Activated CD4-positive, alpha-beta T cell treated with anti-CD3 and anti-CD28 coated beads, Interleukin-2, amount 10 ng/mL, durations not matched to agents 24 days and 14 days (primary cell): ENCODE measurements at regions of chr10 and their contacts with region 1.

Region 1: GRCh38 chr10:22714479-22715289 is at the start of gene PIP4K2A:
- DNase-seq: peak; percentile 94
- H3K4me3 Mint-ChIP-seq: peak within 1 kb of the TSS; percentile 90
- H3K27ac Mint-ChIP-seq: peak within 1 kb of the TSS; percentile 85
- H3K4me1 Mint-ChIP-seq: peaks cover 33% of the 10 kb centered on the region
- H3K27me3 Mint-ChIP-seq: peaks cover 2% of the 10 kb centered on the region
- total RNA-seq, gene PIP4K2A: 94.6 and 101 TPM in 2 replicates

Region 2: GRCh38 chr10:21516242-21517131 is 1198.2 kb before region 1 on chr10:
- intact Hi-C with region 1: loop called (anchors 10 kb)
- DNase-seq: peak; percentile 86
- H3K4me3 Mint-ChIP-seq: peak overlapping the region; percentile 87
- H3K27ac Mint-ChIP-seq: no peak overlapping the region
- H3K4me1 Mint-ChIP-seq: peaks cover 40% of the 10 kb centered on the region
- H3K27me3 Mint-ChIP-seq: peaks cover 78% of the 10 kb centered on the region

Region 3: DNA sequence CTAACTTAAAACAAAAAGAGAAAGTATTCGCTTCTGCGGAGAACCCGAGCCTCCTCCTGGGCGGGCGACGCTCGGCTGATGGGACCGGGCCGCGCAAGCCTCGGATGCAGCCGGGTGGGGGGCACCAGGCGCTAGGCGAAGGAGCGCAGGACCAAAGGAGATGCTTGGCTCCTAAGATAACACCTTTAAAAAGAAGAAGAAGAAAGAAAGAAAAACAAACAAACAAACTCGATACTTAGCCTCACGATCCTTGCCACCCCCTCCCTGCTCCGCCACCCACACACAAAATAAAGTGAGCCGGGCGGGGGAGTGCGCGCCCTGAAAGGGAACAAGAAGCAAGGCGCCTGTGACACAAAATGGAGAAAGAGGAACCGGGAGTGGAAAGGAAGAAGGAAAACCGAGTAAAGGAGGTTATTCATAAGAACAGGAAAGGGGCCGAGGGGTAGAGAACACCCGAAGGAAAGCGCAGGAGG is 462.9 kb before region 1 on chr10:
- intact Hi-C with region 1: loop called (anchors 10 kb)
- DNase-seq: peak; percentile 91
- H3K4me3 Mint-ChIP-seq: peak overlapping the region; percentile 91
- H3K27ac Mint-ChIP-seq: peak overlapping the region; percentile 98
- H3K4me1 Mint-ChIP-seq: peaks cover 31% of the 10 kb centered on the region
- H3K27me3 Mint-ChIP-seq: peaks cover 14% of the 10 kb centered on the region

Region 4: DNA sequence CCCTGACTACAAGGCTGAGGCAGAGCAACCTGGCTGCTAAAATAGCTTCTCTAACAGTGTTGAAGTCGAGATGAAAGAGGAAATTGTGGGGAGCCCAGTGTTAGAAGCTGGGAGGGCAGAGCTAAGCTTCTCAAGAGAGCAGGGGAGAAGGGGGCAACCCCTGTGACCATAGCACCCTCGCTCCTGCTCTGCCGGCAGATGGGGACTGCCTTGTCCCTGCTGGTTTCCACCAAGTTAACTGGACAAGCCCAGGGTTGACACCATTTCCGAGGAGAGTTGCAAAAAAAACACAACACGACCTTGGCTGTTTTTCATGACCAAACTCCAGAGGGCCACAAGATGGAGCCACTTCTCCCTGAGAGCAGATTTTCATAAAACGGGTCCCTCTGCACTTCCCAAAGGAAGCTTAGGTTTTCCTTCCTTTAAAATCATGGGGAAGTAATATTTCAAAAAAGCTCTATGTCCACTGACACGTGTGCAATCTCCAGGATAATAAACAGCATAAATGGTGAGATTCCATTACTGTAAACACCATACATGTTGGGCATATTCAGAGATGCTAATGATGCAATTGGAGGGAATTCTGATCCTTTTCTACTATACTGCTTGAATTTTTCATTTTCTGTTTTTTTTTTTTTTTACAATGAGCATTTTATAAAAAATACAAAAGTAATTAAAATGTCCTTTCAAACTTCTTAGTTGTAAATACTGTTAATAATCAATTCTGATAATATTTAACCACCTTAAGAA is 140.7 kb before region 1 on chr10:
- intact Hi-C with region 1: loop called (anchors 2 kb)
- DNase-seq: no peak
- H3K4me3 Mint-ChIP-seq: no peak overlapping the region
- H3K27ac Mint-ChIP-seq: no peak overlapping the region
- H3K4me1 Mint-ChIP-seq: peaks cover 36% of the 10 kb centered on the region
- H3K27me3 Mint-ChIP-seq: no peaks in the 10 kb centered on the region

Region 5: GRCh38 chr10:22630234-22631174 is 84.2 kb before region 1 on chr10:
- intact Hi-C with region 1: loop called (anchors 5 kb)
- DNase-seq: peak; percentile 84
- H3K4me3 Mint-ChIP-seq: peak overlapping the region; percentile 76
- H3K27ac Mint-ChIP-seq: peak overlapping the region; percentile 95
- H3K4me1 Mint-ChIP-seq: peaks cover 79% of the 10 kb centered on the region
- H3K27me3 Mint-ChIP-seq: no peaks in the 10 kb centered on the region

Region 6: GRCh38 chr10:22682237-22683139 is 32.2 kb before region 1 on chr10:
- intact Hi-C with region 1: loop called (anchors 1 kb)
- DNase-seq: peak; percentile 89
- H3K4me3 Mint-ChIP-seq: peak overlapping the region; percentile 78
- H3K27ac Mint-ChIP-seq: peak overlapping the region; percentile 92
- H3K4me1 Mint-ChIP-seq: peaks cover 76% of the 10 kb centered on the region
- H3K27me3 Mint-ChIP-seq: no peaks in the 10 kb centered on the region

Region 7: GRCh38 chr10:23095404-23095965 is 380.8 kb after region 1 on chr10 and contains the start of gene MSRB2:
- intact Hi-C with region 1: loop called (anchors 10 kb)
- DNase-seq: peak; percentile 90
- H3K4me3 Mint-ChIP-seq: peak within 1 kb of the TSS; percentile 89
- H3K27ac Mint-ChIP-seq: peak within 1 kb of the TSS; percentile 93
- H3K4me1 Mint-ChIP-seq: peaks cover 40% of the 10 kb centered on the region
- H3K27me3 Mint-ChIP-seq: peaks cover 18% of the 10 kb centered on the region
- total RNA-seq, gene MSRB2: 3.3 and 3.9 TPM in 2 replicates